Naive thymus-derived CD8-positive, alpha-beta T cell (primary cell): ENCODE measurements at regions of chr10 and their contacts with region 1.

Region 1: GRCh38 chr10:32378363-32379317 is 31.7 kb upstream of the EPC1 start:
- DNase-seq: peak; percentile 80 to 96 (median 91)
- ATAC-seq: peak; percentile 90 to 91
- H3K4me3 Mint-ChIP-seq: no peak overlapping the region
- H3K27ac Mint-ChIP-seq: no peak overlapping the region
- H3K4me1 Mint-ChIP-seq: peaks cover 6 to 27% (median 18%) of the 10 kb centered on the region in 4 donors
- H3K27me3 Mint-ChIP-seq: no peaks in the 10 kb centered on the region

Region 2: GRCh38 chr10:32346134-32346550 is 32.5 kb before region 1 on chr10:
- POLR2A ChIA-PET with region 1: interaction called, 23 read pairs
- DNase-seq: peak; percentile 93 to 99 (median 96)
- ATAC-seq: peak; percentile 79 to 83
- H3K4me3 Mint-ChIP-seq: peak overlapping the region; percentile 92 to 97 (median 95)
- H3K27ac Mint-ChIP-seq: peak overlapping the region; percentile 98 to 100 (median 100)
- H3K4me1 Mint-ChIP-seq: peaks cover 23 to 81% (median 71%) of the 10 kb centered on the region in 4 donors
- H3K27me3 Mint-ChIP-seq: peaks cover 0 to 1% (median 0%) of the 10 kb centered on the region in 5 donors

Region 3: GRCh38 chr10:32459051-32459698 is 80.5 kb after region 1 on chr10:
- POLR2A ChIA-PET with region 1: interaction called, 25 read pairs
- DNase-seq: peak in 9 of 10 donors; percentile 27 to 89 (median 77)
- ATAC-seq: peak; percentile 98 to 100
- H3K4me3 Mint-ChIP-seq: peak overlapping the region; percentile 44 to 78 (median 64)
- H3K27ac Mint-ChIP-seq: peak overlapping the region; percentile 17 to 91 (median 86)
- H3K4me1 Mint-ChIP-seq: peaks cover 19 to 42% (median 38%) of the 10 kb centered on the region in 4 donors
- H3K27me3 Mint-ChIP-seq: no peaks in the 10 kb centered on the region